Right ventricle myocardium inferior (tissue), 1 donor: ENCODE measurements at regions of chr6 and their contacts with region 1.

Region 1: DNA sequence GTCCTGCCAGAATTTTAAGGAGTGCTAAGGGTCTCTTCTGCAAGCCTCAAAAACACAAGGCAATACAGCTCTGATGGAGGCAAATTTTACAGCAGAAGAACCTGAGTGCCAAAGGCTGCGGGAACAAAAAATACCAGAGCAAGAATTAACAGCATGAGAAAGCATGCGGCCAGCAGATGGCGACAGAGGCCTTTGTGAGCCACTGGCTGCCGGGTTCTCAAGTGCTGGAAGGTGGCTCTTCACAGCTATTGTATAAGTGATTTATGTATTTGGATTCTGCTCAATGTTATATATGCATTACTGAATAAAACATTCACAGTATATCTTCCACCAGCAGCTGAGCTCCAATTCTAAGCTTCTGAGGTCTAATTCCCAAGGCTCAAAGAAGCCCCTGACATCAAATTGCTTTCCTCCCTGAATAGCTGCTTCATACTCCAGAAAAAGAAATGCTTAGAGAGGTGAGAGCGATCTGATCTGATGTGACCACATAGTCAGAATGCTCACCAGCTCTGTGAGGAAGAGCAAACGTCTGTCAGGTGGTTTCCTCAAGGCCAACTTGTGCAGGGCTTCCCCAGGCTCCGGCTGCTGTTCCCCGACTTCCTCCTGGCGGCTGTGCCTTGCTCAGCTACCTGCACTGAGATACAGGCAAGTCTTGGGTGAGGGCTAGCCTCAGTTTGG is 58.6 kb downstream of the PPP1R3G start:
- DNase-seq: peak; percentile 93
- ATAC-seq: peak; percentile 68

Region 2: DNA sequence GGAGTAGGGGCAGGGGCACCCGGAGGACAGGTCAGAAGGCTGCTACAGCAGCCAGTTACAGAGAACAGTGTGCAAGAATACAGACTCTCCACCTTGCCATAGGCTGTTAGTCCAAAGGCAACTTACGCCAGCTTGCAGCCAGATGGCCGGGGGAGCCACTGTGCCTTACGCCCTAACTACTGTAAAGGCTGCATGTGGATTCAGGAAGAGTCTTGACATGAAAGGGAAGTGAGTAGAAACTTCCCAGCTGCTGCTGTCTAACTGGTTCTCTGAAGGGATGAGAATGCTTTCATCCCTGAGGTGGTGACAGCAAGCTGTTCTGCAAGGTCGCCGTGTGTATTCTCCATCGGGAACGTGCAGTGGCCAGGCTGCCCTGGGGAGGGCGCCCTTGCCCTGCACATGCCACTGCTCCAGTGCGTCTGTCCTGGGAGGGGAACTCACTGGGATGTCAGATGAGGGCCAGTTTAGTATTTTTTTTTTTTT is 70.8 kb after region 1 on chr6:
- intact Hi-C with region 1: loop called (anchors 5 kb)
- DNase-seq: peak; percentile 72
- ATAC-seq: peak; percentile 90

Region 3: GRCh38 chr6:5302995-5303622 is 159.3 kb after region 1 on chr6:
- intact Hi-C with region 1: loop called (anchors 2 kb)
- DNase-seq: no peak
- ATAC-seq: peak; percentile 75

Region 4: DNA sequence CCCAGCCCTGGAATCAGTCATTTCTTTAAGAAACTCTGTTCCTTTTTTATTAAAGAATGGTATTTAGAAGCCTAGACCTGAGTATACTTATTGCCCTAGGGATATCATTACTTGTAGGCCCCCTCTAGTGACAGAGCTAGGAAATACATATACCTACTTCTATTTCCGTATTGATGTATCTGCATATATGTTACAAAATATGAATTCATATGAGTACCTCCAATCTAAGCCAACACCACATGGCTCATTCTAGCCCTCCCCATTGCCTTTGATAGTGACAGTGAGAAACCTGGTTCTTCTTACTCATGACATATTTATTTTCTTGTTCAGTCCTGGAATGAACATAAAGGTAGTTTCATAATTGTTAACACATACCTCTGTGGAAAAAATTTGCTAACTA is 254.8 kb after region 1 on chr6:
- intact Hi-C with region 1: loop called (anchors 2 kb)
- DNase-seq: no peak
- ATAC-seq: no peak